A549 (cell line): ENCODE measurements at regions of chr19 and their contacts with region 1.

Region 1: GRCh38 chr19:44653977-44654774 is 10.5 kb downstream of the PVR start:
- DNase-seq: peak; percentile 87 to 88
- ATAC-seq: peak; percentile 80 to 85
- H3K4me3 ChIP-seq: no peak overlapping the region
- H3K27ac ChIP-seq: peak overlapping the region; percentile 34 to 77; a peak in 5 of 6 replicates
- H3K4me1 ChIP-seq: peaks cover 31% of the 10 kb centered on the region
- CTCF ChIP-seq: peak; percentile 93
- EP300 ChIP-seq: no peak
- POLR2A ChIP-seq: no peak
- RAD21 ChIP-seq: peak; percentile 92 to 94

Region 2: DNA sequence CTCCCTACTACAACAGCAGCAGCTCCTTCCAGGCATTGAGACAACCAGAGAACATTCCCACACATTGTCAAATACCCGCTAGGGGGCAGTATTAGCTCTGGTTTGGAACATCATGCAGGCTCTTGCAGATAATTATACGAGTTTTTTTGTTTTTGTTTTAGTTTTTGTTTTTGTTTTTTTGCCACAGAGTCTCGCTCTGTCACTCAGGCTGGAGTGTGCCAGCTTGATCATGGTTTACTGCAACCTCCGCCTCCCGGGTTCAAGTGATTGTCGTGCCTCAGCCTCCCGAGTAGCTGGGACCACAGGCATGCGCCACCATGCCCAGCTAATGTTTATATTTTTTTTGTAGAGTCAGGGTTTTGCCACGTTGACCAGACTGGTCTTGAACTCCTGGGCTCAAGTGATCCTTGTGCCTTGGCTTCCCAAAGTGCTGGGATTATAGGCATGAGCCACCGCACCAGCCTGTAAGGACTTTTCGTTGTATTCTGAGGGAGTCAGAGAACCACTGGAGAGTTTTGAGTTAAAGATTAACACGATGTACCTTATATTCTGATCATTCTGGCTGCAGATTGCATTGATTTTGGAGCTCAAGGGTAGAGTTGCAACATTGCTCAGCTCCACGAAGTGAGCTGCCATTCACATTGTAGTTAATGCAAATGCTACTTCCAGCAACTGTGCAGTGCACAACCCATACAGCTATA is 83.0 kb before region 1 on chr19:
- CTCF ChIA-PET with region 1: interaction called, 71 read pairs
- POLR2A ChIA-PET with region 1: no interaction called
- DNase-seq: peak; percentile 82 to 86
- ATAC-seq: peak; percentile 87 to 95
- H3K4me3 ChIP-seq: no peak overlapping the region
- H3K27ac ChIP-seq: peak overlapping the region in 1 of 2 experiments; percentile 57; a peak in 2 of 6 replicates
- H3K4me1 ChIP-seq: peaks cover 8% of the 10 kb centered on the region
- CTCF ChIP-seq: peak; percentile 98
- EP300 ChIP-seq: no peak
- POLR2A ChIP-seq: no peak
- RAD21 ChIP-seq: peak; percentile 95 to 96

Region 3: GRCh38 chr19:44582581-44583265 is 71.5 kb before region 1 on chr19:
- CTCF ChIA-PET with region 1: interaction called, 107 read pairs
- POLR2A ChIA-PET with region 1: interaction called, 4 read pairs
- DNase-seq: peak; percentile 58 to 65
- ATAC-seq: peak; percentile 44 to 80; a peak in 3 of 6 replicates
- H3K4me3 ChIP-seq: no peak overlapping the region
- H3K27ac ChIP-seq: peak overlapping the region in 1 of 2 experiments; percentile 7; a peak in 1 of 6 replicates
- H3K4me1 ChIP-seq: peaks cover 23% of the 10 kb centered on the region
- CTCF ChIP-seq: peak; percentile 50
- EP300 ChIP-seq: no peak; a peak in 1 of 5 replicates
- POLR2A ChIP-seq: no peak
- RAD21 ChIP-seq: peak in 1 of 2 experiments; percentile 60; a peak in 3 of 5 replicates

Region 4: GRCh38 chr19:44607049-44607448 is 47.1 kb before region 1 on chr19:
- CTCF ChIA-PET with region 1: interaction called, 115 read pairs
- POLR2A ChIA-PET with region 1: interaction called, 9 read pairs
- DNase-seq: peak in 1 of 2 experiments; percentile 67
- ATAC-seq: peak in 1 of 2 experiments; percentile 53; a peak in 4 of 6 replicates
- H3K4me3 ChIP-seq: no peak overlapping the region
- H3K27ac ChIP-seq: peak overlapping the region; percentile 46; a peak in 5 of 6 replicates
- H3K4me1 ChIP-seq: peaks cover 46% of the 10 kb centered on the region
- CTCF ChIP-seq: no peak
- EP300 ChIP-seq: no peak
- POLR2A ChIP-seq: no peak
- RAD21 ChIP-seq: no peak

Region 5: GRCh38 chr19:44635581-44636438 is 18.4 kb before region 1 on chr19:
- CTCF ChIA-PET with region 1: interaction called, 62 read pairs
- POLR2A ChIA-PET with region 1: interaction called, 3 read pairs
- DNase-seq: no peak
- ATAC-seq: peak; percentile 47 to 57; a peak in 5 of 6 replicates
- H3K4me3 ChIP-seq: no peak overlapping the region
- H3K27ac ChIP-seq: peak overlapping the region; percentile 84 to 97
- H3K4me1 ChIP-seq: peaks cover 60% of the 10 kb centered on the region
- CTCF ChIP-seq: no peak
- EP300 ChIP-seq: no peak
- POLR2A ChIP-seq: no peak
- RAD21 ChIP-seq: no peak

Region 6: GRCh38 chr19:44677019-44677821 is 23.0 kb after region 1 on chr19:
- CTCF ChIA-PET with region 1: interaction called, 180 read pairs
- POLR2A ChIA-PET with region 1: no interaction called
- DNase-seq: peak; percentile 89 to 90
- ATAC-seq: peak; percentile 62 to 86
- H3K4me3 ChIP-seq: no peak overlapping the region
- H3K27ac ChIP-seq: peak overlapping the region; percentile 61 to 86
- H3K4me1 ChIP-seq: peaks cover 34% of the 10 kb centered on the region
- CTCF ChIP-seq: no peak
- EP300 ChIP-seq: no peak
- POLR2A ChIP-seq: no peak
- RAD21 ChIP-seq: no peak

Region 7: DNA sequence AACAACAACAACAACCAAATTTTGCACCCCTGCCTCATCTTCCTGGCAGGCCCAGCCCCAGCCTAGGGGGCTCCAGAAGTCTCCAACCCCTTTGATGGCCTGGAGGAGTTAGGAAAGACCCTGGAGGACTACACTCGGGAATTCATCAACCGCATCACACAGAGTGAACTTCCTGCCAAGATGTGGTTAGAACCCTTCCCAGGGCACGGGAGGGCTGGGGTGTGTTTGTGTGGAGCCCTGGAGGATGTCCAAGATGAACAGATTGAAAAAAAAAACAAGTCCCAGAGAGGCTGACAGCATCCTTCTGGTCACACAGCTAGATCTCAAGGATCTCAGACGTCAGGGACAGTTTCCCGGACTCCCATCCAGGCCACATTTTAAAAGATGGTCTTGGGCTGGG is 273.6 kb after region 1 on chr19:
- CTCF ChIA-PET with region 1: no interaction called
- POLR2A ChIA-PET with region 1: no interaction called
- DNase-seq: no peak
- ATAC-seq: no peak
- H3K4me3 ChIP-seq: no peak overlapping the region
- H3K27ac ChIP-seq: peak overlapping the region in 1 of 2 experiments; percentile 80; a peak in 3 of 6 replicates
- H3K4me1 ChIP-seq: peaks cover 15% of the 10 kb centered on the region; the same call in 2 of the 3 replicates
- CTCF ChIP-seq: no peak
- EP300 ChIP-seq: no peak
- POLR2A ChIP-seq: no peak
- RAD21 ChIP-seq: no peak